ENCODE measurements at regions of chr3 and their contacts with region 1.

Region 1: DNA sequence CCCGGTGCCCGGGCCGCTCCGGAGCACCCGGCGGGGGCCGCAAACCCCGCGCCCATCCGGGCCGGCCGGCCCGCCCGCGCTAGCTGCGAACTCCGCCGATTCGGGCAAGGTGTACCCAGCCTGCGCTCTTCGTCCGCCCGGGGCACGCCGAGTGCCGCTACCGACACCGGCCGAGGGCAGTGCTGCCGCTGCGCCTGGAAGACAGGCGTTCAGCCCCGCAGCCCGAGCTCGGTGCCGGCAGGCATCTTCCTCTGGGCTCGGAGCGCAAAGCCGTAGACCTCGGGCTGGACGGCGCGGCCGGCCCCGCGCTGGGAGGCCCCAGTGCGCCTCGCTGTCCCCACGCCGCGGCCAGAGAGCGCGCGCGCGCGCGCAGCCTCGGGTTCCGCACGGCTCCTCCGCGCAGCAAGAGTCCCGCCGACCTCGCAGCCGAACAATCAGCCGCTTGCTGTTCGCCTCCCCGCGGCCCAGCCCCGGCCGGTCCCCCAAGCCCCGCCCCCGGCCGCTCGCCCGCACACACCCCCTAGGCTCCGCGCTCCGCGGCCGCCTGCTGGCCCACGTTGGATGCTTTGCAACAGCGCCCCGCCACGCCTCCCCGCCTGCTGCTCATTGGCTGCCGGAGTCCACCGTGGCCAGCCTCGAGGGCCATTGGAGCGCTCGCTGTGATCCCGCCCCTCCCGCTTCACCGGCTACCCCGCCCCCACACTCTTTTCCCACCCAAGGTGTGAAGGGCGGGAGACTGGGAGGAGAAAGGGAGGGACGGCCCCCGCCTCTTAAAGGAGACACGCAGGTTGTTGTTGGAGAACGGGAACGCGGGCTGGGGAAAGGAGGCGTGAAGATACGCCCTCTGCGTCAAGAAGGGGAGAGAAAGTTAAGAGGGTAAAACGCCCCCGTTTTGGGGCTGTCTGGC is at the start of gene LRIG1:
- DNase-seq: peak; percentile 100
- H3K4me3 ChIP-seq: peak within 1 kb of the TSS; percentile 93
- H3K27ac ChIP-seq: peak within 1 kb of the TSS; percentile 96
- H3K4me1 ChIP-seq: peaks cover 62% of the 10 kb centered on the region
- H3K27me3 ChIP-seq: no peaks in the 10 kb centered on the region
- CTCF ChIP-seq: peak; percentile 71
- total RNA-seq, gene LRIG1: 137 TPM

Region 2: GRCh38 chr3:66261355-66261754 is 239.5 kb before region 1 on chr3:
- intact Hi-C with region 1: no loop called
- DNase-seq: no peak
- H3K4me3 ChIP-seq: no peak overlapping the region
- H3K27ac ChIP-seq: no peak overlapping the region
- H3K4me1 ChIP-seq: peaks cover 27% of the 10 kb centered on the region
- H3K27me3 ChIP-seq: no peaks in the 10 kb centered on the region
- CTCF ChIP-seq: no peak

Region 3: DNA sequence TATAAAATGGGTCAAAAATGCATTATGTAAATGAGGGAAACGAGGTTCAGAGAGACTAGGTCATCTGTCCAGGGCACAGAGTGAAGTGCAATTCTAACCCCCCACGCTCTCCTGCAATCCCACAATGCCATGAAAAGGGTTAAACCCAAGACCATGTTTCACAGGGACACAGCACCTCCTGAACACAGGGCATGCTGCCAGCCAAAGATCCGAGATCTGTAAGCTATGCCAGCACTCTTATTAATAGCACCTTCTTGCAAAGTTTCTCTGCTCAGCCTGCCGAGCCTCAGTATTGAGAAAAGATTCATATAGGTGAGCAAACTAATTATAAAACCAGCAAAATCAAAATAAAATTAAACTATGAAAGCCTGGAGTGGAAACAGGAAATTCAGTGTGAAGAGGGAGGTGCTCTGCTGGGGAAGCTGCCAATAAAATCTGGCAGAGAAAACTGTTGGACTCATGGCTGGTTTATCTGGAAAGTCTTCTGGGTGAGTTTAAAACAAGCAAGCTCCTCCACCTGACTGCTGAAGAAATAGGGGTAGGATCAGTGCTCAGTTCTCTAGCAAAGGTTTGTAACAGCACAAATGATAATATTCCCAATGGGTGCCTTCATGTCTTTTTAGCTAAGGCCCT is 50.3 kb before region 1 on chr3:
- intact Hi-C with region 1: loop called (anchors 5 kb)
- DNase-seq: peak; percentile 55
- H3K4me3 ChIP-seq: peak overlapping the region; percentile 37
- H3K27ac ChIP-seq: peak overlapping the region; percentile 82
- H3K4me1 ChIP-seq: peaks cover 89% of the 10 kb centered on the region
- H3K27me3 ChIP-seq: no peaks in the 10 kb centered on the region
- CTCF ChIP-seq: no peak

Region 4: GRCh38 chr3:66572938-66573710 is 72.3 kb after region 1 on chr3:
- intact Hi-C with region 1: no loop called
- DNase-seq: no peak
- H3K4me3 ChIP-seq: no peak overlapping the region
- H3K27ac ChIP-seq: no peak overlapping the region
- H3K4me1 ChIP-seq: no peaks in the 10 kb centered on the region
- H3K27me3 ChIP-seq: no peaks in the 10 kb centered on the region
- CTCF ChIP-seq: no peak